H1 (cell line): ENCODE measurements at regions of chr2 and their contacts with region 1.

Region 1: GRCh38 chr2:99615247-99615771 is 125.5 kb upstream of the REV1 start:
- DNase-seq: peak in 1 of 2 experiments; percentile 53
- H3K4me3 ChIP-seq: no peak overlapping the region
- H3K27ac ChIP-seq: no peak overlapping the region
- H3K4me1 ChIP-seq: no peaks in the 10 kb centered on the region
- H3K27me3 ChIP-seq: no peaks in the 10 kb centered on the region
- CTCF ChIP-seq: peak; percentile 48 to 73 (median 57)
- EP300 ChIP-seq: no peak
- POLR2A ChIP-seq: no peak
- RAD21 ChIP-seq: peak; percentile 59 to 66

Region 2: DNA sequence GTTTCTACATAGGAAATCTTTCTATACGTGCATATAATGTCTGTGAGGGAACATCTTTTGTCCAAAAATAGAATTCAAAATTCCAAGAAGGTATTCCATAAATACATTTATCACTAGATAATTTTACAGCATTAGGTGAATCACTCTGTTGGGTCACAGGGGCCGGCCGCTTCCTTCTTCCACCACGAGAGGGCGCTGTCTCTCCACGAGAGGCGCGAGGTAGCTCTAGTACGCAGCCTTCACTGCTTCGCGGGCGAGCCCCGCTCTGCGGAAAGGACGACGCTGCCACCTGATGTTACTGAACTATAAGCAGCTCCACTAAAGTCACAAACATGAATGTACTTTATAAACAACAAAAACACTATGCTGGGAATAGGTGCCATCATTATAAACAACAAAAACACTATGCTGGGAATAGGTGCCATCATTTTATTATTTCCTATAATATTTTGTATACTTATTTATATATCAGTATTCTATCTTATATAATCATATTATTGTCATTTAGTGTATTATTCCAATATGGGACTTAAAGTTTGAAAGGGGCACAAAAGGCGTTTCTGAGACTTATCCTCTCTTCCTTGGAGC is 56.1 kb before region 1 on chr2:
- CTCF ChIA-PET with region 1: interaction called, 47 read pairs
- POLR2A ChIA-PET with region 1: no interaction called
- DNase-seq: peak in 1 of 2 experiments; percentile 97
- H3K4me3 ChIP-seq: no peak overlapping the region
- H3K27ac ChIP-seq: no peak overlapping the region
- H3K4me1 ChIP-seq: peaks cover 2 to 9% (median 7%) of the 10 kb centered on the region in 4 experiments; a peak in 5 of 7 replicates
- H3K27me3 ChIP-seq: no peaks in the 10 kb centered on the region
- CTCF ChIP-seq: peak; percentile 87 to 95 (median 87)
- EP300 ChIP-seq: no peak
- POLR2A ChIP-seq: no peak
- RAD21 ChIP-seq: peak; percentile 99

Region 3: GRCh38 chr2:99602475-99602874 is 12.8 kb before region 1 on chr2:
- CTCF ChIA-PET with region 1: interaction called, 21 read pairs
- POLR2A ChIA-PET with region 1: no interaction called
- DNase-seq: no peak
- H3K4me3 ChIP-seq: no peak overlapping the region
- H3K27ac ChIP-seq: no peak overlapping the region
- H3K4me1 ChIP-seq: peaks cover 0 to 3% (median 0%) of the 10 kb centered on the region in 4 experiments; a peak in 3 of 7 replicates
- H3K27me3 ChIP-seq: no peaks in the 10 kb centered on the region
- CTCF ChIP-seq: no peak
- EP300 ChIP-seq: no peak
- POLR2A ChIP-seq: no peak
- RAD21 ChIP-seq: no peak

Region 4: DNA sequence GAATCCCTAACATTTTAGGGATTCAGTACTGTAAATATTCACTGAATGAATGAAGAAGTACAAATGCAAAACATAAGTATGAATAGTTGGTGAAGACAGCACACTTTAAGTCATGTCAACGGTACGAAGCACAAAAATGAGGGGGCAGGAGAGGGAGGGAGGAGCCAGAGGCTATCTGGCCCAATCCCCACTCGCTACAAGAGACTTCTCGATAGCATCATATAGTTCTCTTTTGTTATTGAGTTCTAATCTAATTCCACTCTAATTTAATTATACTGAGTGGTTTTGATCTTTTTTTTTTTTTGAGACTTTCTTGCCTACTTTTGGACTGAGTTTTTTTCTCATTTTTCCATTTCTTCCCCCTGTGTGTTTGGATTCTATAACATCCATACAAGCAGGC is 26.7 kb after region 1 on chr2:
- CTCF ChIA-PET with region 1: no interaction called
- POLR2A ChIA-PET with region 1: no interaction called
- DNase-seq: no peak
- H3K4me3 ChIP-seq: no peak overlapping the region
- H3K27ac ChIP-seq: no peak overlapping the region
- H3K4me1 ChIP-seq: no peaks in the 10 kb centered on the region
- H3K27me3 ChIP-seq: no peaks in the 10 kb centered on the region
- CTCF ChIP-seq: no peak
- EP300 ChIP-seq: no peak
- POLR2A ChIP-seq: no peak
- RAD21 ChIP-seq: no peak